ENCODE measurements at regions of chr20 and their contacts with region 1.

Region 1: DNA sequence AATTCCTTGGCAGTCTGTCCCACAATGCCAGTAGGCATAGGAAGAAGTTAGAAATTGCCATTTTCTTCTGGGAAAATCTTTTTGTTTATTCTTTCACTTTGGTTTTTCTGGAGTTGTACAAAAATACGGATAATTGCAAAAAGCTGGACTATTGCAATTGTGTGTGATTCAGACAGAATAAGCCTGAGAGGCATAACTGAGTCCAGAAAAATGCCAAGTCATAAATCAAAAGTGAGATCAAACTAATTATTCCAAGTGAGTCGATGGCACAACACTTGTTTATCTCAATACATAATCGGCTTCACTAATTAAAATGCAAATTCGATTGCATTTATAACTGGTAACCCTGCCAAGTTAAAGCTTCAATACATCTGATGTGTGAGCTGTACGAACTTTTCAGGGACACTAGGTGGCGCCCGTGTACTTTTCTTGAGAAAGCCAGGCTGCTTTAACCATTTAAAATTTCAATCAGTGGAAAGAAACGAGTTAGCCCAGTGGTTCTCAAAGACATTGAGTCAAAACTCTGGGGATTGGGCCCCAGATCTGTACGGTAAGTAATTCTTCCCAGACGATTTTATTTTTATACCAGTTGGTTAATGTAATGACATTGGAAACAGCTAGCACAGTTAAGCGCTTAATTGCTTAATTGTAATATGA is 102.6 kb downstream of the LAMP5 start:
- DNase-seq: peak; percentile 78
- H3K4me3 ChIP-seq: peak overlapping the region; percentile 42
- H3K27ac ChIP-seq: no peak overlapping the region
- H3K4me1 ChIP-seq: peaks cover 22% of the 10 kb centered on the region
- CTCF ChIP-seq: peak; percentile 97

Region 2: DNA sequence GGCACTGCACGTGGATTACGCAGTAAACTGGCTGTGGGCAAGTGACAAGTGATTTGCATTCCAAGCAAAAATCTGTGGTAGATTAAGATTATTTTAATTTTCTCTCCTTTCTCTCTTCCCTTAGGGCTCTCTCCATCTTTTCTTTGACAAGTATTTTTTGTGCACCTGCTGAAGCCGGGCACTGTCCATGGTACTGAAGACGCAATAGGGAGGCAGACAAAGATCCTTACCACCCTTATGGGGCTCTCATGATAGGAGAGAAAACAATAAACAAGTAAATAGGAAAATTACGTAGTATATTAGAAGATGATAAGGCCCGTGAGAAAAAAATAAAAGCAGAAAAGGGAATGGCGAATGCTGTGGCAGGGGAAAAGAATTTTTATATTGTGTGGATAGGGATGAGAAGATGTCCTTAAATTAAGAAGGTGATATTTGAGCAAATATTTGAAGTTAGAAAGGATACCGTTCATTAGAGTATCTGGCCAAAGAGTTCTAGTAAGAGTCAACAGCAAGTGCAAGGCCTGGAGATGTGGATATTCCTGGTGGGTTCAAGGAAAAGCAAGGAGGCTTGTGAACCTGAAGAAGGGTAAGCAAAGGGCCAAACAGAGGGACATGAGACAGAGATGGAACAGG is 43.4 kb after region 1 on chr20:
- CTCF ChIA-PET with region 1: no interaction called
- POLR2A ChIA-PET with region 1: no interaction called
- intact Hi-C with region 1: no loop called
- DNase-seq: peak; percentile 5
- H3K4me3 ChIP-seq: no peak overlapping the region
- H3K27ac ChIP-seq: no peak overlapping the region
- H3K4me1 ChIP-seq: no peaks in the 10 kb centered on the region
- CTCF ChIP-seq: no peak

Region 3: GRCh38 chr20:9912858-9913434 is 296.0 kb after region 1 on chr20:
- CTCF ChIA-PET with region 1: no interaction called
- POLR2A ChIA-PET with region 1: interaction called, 3 read pairs
- intact Hi-C with region 1: loop called (anchors 2 kb)
- DNase-seq: peak; percentile 34
- H3K4me3 ChIP-seq: no peak overlapping the region
- H3K27ac ChIP-seq: no peak overlapping the region
- H3K4me1 ChIP-seq: no peaks in the 10 kb centered on the region
- CTCF ChIP-seq: peak; percentile 89

Region 4: DNA sequence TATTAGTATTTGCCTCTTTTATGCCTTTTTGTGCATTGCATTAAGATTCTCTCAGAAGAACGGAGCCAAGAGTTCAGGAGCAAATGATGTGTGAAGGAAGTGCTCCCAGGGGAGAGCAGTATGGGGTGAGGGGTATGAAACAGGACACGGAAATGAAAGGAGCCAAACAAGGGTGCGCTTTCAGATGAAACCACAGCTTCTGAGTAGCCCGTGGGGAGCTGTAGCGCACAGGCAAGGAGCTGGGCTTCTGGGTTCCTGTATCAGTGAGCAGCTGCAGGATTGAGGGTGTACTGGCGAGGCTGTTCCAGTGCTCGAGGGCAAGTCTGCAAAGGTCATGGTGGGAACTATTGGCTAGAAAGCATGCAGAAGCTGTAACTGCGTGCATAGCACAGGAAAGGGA is 443.3 kb after region 1 on chr20:
- CTCF ChIA-PET with region 1: no interaction called
- POLR2A ChIA-PET with region 1: no interaction called
- intact Hi-C with region 1: loop called (anchors 5 kb)
- DNase-seq: peak; percentile 71
- H3K4me3 ChIP-seq: no peak overlapping the region
- H3K27ac ChIP-seq: no peak overlapping the region
- H3K4me1 ChIP-seq: peaks cover 26% of the 10 kb centered on the region
- CTCF ChIP-seq: no peak

Region 5: GRCh38 chr20:10090588-10091166 is 473.7 kb after region 1 on chr20:
- CTCF ChIA-PET with region 1: no interaction called
- POLR2A ChIA-PET with region 1: no interaction called
- intact Hi-C with region 1: loop called (anchors 1 kb)
- DNase-seq: peak; percentile 49
- H3K4me3 ChIP-seq: no peak overlapping the region
- H3K27ac ChIP-seq: no peak overlapping the region
- H3K4me1 ChIP-seq: no peaks in the 10 kb centered on the region
- CTCF ChIP-seq: peak; percentile 82

Region 6: GRCh38 chr20:10427060-10427692 is 810.2 kb after region 1 on chr20:
- CTCF ChIA-PET with region 1: no interaction called
- POLR2A ChIA-PET with region 1: no interaction called
- intact Hi-C with region 1: loop called (anchors 2 kb)
- DNase-seq: peak; percentile 52
- H3K4me3 ChIP-seq: no peak overlapping the region
- H3K27ac ChIP-seq: no peak overlapping the region
- H3K4me1 ChIP-seq: no peaks in the 10 kb centered on the region
- CTCF ChIP-seq: peak; percentile 98

Region 7: DNA sequence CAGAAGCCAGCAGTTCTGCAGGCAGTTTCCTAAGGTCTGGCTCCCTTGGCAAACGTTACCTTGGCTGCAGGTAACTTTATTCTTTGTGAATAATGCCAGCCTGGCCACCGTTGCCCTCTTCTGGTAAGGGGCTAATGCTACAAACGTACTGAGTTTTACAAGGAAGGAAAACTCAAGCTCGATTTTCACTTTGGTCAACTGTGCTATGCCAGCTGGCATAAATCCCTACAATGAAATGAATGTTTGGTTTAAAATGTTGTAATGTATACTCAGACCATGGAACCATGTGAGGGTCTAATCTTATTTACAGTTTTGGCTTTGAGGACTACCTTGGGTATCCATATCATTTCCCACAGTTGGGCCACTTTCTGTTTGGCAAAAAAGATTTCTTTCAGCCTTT is 919.6 kb after region 1 on chr20:
- CTCF ChIA-PET with region 1: interaction called, 3 read pairs
- POLR2A ChIA-PET with region 1: no interaction called
- intact Hi-C with region 1: loop called (anchors 5 kb)
- DNase-seq: peak; percentile 3
- H3K4me3 ChIP-seq: no peak overlapping the region
- H3K27ac ChIP-seq: no peak overlapping the region
- H3K4me1 ChIP-seq: no peaks in the 10 kb centered on the region
- CTCF ChIP-seq: peak; percentile 68

Region 8: DNA sequence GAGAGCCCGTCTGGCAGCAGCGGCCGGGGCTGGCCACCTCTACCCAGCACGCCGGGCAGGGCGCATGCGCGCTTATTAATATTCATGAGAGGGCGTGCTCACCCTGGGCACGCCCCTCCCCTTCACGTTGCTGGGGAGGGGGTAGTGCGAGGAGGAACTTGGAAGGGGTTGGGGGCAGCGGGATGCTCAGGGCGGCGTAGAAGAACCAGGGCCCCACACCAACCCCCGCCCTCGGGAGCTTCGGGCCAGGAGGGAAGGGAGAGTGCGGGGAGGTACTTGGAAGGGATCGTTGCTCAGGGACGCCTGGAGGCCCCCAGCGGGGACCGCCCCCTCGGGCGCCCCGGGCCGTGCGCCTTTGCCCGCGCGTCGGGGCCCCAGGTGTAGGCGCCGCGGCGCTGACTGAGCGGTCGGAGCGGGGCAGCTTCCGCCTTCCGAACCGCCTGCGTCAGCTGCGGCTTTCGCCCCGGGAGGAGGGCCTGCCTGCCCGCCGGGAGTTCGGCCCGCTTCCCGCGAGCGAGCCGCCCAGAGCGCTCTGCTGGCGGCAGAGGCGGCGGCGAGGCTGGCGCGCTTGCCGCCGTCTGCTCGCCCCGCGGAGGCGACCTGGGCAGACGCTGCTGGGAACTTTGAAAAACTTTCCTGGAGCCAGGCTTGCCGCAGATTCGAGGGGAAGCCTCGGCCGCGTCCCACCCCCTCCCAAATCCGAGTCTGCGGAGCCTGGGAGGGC is 1057.2 kb after region 1 on chr20 and contains the start of gene JAG1:
- CTCF ChIA-PET with region 1: no interaction called
- POLR2A ChIA-PET with region 1: no interaction called
- intact Hi-C with region 1: loop called (anchors 10 kb)
- DNase-seq: peak; percentile 90
- H3K4me3 ChIP-seq: peak within 1 kb of the TSS; percentile 67
- H3K27ac ChIP-seq: peak within 1 kb of the TSS; percentile 51
- H3K4me1 ChIP-seq: peaks cover 40% of the 10 kb centered on the region
- CTCF ChIP-seq: no peak
- total RNA-seq, gene JAG1: 0.28 and 0.32 TPM in 2 replicates

Measured in OCI-LY7 (cell line).